Activated CD4-positive, alpha-beta T cell treated with anti-CD3 and anti-CD28 coated beads, Interleukin-2, amount 10 ng/mL, durations not matched to agents 24 days and 14 days (primary cell): ENCODE measurements at regions of chr16 and their contacts with region 1.

Region 1: DNA sequence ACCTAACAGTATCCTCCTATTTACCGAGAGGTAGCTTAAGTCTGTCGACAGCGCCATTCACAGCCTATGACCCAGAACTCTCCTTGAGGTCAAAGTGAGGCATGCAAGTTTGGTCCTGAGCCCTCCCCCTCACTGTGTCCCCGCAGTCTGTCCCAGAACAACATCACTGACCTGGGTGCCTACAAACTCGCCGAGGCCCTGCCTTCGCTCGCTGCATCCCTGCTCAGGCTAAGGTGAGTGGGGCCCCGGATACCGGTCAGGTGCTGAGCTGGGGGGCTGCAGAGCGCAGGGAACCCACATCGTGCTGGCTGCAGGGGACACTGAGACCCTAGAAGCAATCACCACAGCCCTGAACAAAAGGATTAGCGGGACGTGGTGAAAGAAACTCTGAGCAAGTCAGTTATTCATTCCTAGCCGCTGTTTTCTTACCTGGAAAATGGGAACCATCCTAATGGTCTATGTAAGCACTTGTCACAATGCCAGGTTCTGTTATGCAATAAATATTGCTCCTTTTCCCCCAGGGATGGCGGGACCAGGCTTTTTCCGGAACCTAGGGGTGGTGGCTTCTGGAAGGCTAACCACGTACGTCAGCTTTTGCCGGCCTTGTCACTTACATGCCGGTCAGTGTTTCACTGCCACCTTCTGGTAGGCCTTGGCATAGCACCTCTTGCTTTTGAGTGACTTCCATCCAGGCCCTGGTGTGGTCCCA is 23.8 kb downstream of the DEXI start:
- DNase-seq: peak; percentile 94
- H3K4me3 Mint-ChIP-seq: no peak overlapping the region
- H3K27ac Mint-ChIP-seq: no peak overlapping the region
- H3K4me1 Mint-ChIP-seq: peaks cover 18% of the 10 kb centered on the region
- H3K27me3 Mint-ChIP-seq: peaks cover 4% of the 10 kb centered on the region

Region 2: DNA sequence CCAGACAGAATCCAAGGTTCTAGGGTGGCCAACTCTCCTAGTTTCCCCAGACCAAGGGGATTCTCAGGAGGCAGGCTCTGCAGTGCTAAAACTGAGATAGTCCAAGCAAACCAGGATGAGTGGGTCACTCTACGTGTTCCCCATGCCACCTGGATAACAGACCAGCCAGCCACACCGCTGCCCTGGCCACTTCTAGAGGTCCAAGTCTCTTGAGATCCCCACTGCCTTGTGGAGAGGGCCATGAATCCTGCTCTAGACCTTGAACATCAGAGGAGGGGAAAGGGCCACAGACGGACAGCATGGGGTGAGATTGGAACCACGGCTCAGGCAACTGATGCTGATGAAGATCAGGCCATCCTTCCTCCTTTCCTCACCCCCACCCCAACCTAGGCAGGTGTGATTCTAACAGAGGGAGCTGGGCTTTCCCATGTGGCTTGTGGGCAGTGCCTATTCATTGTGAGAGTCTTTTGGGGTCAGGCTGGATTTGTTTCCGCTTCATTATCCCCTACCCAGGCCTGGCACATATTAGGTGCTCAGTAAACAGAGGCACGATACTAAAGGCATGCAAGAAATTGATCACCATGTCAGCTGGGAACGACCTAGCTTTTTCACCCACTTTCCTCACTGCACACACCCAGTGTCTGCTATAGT is 83.0 kb before region 1 on chr16:
- intact Hi-C with region 1: loop called (anchors 5 kb)
- DNase-seq: peak; percentile 64
- H3K4me3 Mint-ChIP-seq: no peak overlapping the region
- H3K27ac Mint-ChIP-seq: no peak overlapping the region
- H3K4me1 Mint-ChIP-seq: no peaks in the 10 kb centered on the region
- H3K27me3 Mint-ChIP-seq: peaks cover 15% of the 10 kb centered on the region

Region 3: DNA sequence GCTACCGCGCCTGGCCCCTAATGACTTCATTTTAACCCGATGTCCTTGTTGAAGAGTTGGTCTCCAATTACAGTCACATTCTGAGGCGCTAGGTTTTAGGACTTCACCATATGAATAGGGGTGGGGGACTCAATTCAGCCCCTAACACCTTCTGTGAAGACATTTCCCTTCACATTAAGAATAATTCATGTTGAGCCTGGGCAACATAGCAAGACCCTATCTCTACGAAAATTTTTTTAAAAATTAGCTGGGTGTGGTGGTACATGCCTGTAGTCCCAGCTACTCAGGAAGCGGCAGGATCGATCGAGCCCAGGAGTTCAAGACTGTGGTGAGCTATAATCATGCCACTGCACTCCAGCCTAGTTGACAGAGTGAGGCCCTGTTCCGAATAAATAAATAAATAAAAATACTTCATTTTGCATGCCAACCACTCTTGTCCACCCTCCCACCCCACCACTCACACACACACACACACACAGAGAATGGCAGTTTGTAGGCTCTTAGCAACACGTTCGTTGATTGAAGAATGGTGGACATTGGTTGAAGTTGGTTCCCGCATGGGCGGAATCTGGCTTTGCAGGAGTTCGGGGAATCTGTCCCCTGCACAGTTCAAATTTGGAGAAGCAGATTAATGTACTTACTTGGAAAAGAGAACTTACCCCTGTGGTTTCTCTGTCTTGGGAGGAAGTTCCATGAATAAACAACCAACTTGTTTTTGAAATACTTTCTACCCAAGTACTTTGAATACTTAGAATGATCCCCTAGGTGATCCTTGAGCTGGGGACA is 72.0 kb before region 1 on chr16:
- intact Hi-C with region 1: no loop called
- DNase-seq: no peak
- H3K4me3 Mint-ChIP-seq: no peak overlapping the region
- H3K27ac Mint-ChIP-seq: no peak overlapping the region
- H3K4me1 Mint-ChIP-seq: peaks cover 3% of the 10 kb centered on the region
- H3K27me3 Mint-ChIP-seq: peaks cover 21% of the 10 kb centered on the region

Region 4: GRCh38 chr16:10871149-10871991 is 47.1 kb before region 1 on chr16:
- intact Hi-C with region 1: loop called (anchors 2 kb)
- DNase-seq: peak; percentile 87
- H3K4me3 Mint-ChIP-seq: peak overlapping the region; percentile 45
- H3K27ac Mint-ChIP-seq: peak overlapping the region; percentile 85
- H3K4me1 Mint-ChIP-seq: peaks cover 66% of the 10 kb centered on the region
- H3K27me3 Mint-ChIP-seq: peaks cover 25% of the 10 kb centered on the region

Region 5: GRCh38 chr16:10878638-10879501 is 39.6 kb before region 1 on chr16:
- intact Hi-C with region 1: loop called (anchors 2 kb)
- DNase-seq: peak; percentile 86
- H3K4me3 Mint-ChIP-seq: peak overlapping the region; percentile 95
- H3K27ac Mint-ChIP-seq: peak overlapping the region; percentile 78
- H3K4me1 Mint-ChIP-seq: peaks cover 71% of the 10 kb centered on the region
- H3K27me3 Mint-ChIP-seq: peaks cover 41% of the 10 kb centered on the region

Region 6: DNA sequence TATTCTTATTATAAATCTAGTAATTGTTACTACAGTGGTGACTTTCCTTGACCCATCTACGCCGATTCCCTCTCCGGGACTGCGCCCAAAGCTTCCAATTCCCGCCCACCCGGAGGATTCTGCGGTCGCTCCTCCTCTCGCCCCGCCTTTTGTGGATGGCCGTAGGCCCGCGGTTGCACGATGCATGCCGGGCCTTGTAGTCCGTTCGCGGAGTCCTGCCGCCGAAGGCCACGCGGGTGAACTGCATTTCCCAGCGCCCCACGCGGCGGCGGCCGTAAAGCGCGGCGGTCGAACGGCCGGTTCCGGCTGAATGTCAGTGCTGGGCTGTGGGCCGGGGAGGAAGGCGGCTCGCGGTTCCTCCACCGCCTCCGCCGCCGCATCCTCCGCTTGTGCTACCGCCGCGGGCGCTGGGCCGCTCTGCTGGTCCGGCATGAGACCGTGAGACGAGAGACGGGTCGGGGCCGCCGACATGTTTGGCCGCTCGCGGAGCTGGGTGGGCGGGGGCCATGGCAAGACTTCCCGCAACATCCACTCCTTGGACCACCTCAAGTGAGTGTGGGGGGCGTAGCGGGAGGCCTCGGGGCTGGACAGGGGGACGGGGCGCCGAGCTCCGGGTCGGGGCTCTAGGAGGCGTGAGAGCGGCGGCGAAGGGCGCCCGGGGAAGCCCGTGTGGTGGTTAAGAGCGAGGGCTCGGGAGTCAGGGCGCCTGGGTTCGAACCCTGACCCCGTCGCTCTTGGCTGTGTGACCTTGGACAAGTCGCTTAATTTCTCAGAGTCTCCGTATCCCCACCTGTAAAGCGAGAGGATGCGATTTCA is 26.0 kb after region 1 on chr16 and contains the start of gene CLEC16A:
- intact Hi-C with region 1: no loop called
- DNase-seq: peak; percentile 99
- H3K4me3 Mint-ChIP-seq: peak within 1 kb of the TSS; percentile 84
- H3K27ac Mint-ChIP-seq: peak within 1 kb of the TSS; percentile 79
- H3K4me1 Mint-ChIP-seq: peaks cover 56% of the 10 kb centered on the region
- H3K27me3 Mint-ChIP-seq: no peaks in the 10 kb centered on the region
- total RNA-seq, gene CLEC16A: 35.9 and 36.2 TPM in 2 replicates

Region 7: GRCh38 chr16:10981697-10982216 is 63.3 kb after region 1 on chr16:
- intact Hi-C with region 1: no loop called
- DNase-seq: peak; percentile 86
- H3K4me3 Mint-ChIP-seq: no peak overlapping the region
- H3K27ac Mint-ChIP-seq: no peak overlapping the region
- H3K4me1 Mint-ChIP-seq: peaks cover 60% of the 10 kb centered on the region
- H3K27me3 Mint-ChIP-seq: no peaks in the 10 kb centered on the region